ENCODE measurements at regions of chr17 and their contacts with region 1.

Region 1: DNA sequence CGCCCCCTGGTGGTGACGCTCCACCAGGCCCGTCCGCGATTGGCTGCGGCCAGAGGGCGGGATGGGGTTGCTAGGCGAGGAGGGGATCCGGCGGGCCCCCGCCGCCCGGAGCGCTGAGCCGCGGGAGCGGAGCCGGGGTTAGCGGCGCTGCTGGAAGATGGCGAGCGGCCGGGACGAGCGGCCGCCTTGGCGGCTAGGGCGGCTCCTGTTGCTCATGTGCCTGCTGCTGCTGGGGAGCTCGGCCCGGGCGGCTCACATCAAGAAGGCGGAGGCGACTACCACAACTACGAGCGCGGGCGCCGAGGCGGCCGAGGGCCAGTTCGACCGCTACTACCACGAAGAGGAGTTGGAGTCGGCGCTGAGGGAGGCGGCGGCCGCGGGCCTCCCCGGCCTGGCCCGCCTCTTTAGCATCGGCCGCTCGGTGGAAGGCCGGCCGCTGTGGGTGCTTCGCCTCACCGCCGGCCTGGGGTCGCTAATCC is at the start of gene CPD:
- DNase-seq: peak; percentile 82
- H3K4me3 ChIP-seq: peak within 1 kb of the TSS; percentile 79
- H3K27ac ChIP-seq: peak within 1 kb of the TSS; percentile 69
- H3K27me3 ChIP-seq: no peaks in the 10 kb centered on the region
- CTCF ChIP-seq: no peak
- polyA plus RNA-seq, gene CPD: 88.0 and 109 TPM in 2 replicates

Region 2: GRCh38 chr17:30393911-30394867 is 15.3 kb after region 1 on chr17:
- CTCF ChIA-PET with region 1: interaction called, 3 read pairs
- POLR2A ChIA-PET with region 1: interaction called, 12 read pairs
- DNase-seq: no peak
- H3K4me3 ChIP-seq: no peak overlapping the region
- H3K27ac ChIP-seq: no peak overlapping the region
- H3K27me3 ChIP-seq: no peaks in the 10 kb centered on the region
- CTCF ChIP-seq: no peak

Region 3: DNA sequence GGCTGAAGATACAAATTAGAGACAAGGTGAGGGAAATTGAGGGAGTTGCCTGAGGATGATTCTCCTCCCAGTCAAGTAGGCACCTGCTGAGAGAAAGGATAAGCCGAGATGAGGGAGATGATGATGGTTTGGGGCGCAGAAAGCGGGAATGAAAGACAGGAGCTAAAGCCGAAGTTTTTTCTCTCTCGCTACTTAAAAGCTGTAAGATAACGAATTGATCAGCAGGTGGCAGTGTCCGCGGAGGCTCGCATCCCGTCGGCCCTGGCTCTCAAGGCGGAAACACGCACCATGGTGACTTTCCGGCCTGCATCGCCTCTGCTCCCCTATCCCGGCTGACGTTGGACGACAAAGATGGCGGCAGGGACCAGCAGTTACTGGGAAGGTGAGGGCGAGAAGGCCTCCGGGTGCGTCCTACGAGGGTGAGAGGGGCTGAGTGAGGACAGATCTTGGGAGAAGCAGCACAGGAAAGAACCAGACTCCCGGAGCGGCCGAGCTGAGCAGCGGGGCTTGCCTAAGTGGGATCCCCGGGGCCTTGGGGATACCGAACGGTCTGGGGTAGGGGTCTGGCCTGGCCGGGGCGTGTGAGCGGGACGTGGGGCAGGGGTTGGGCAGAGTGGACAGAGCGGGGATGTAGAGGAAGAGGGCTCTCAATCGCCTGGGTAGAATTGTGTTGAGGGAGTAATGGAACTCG is 98.4 kb after region 1 on chr17 and contains the start of gene GOSR1:
- CTCF ChIA-PET with region 1: interaction called, 12 read pairs
- POLR2A ChIA-PET with region 1: no interaction called
- DNase-seq: peak; percentile 90
- H3K4me3 ChIP-seq: peak within 1 kb of the TSS; percentile 75
- H3K27ac ChIP-seq: peak within 1 kb of the TSS; percentile 74
- H3K27me3 ChIP-seq: no peaks in the 10 kb centered on the region
- CTCF ChIP-seq: peak; percentile 81
- polyA plus RNA-seq, gene GOSR1: 21.1 and 28.5 TPM in 2 replicates